Activated CD4-positive, alpha-beta T cell treated with anti-CD3 and anti-CD28 coated beads, Interleukin-2, amount 10 ng/mL, durations not matched to agents 24 days and 14 days (primary cell): ENCODE measurements at regions of chr15 and their contacts with region 1.

Region 1: GRCh38 chr15:55221090-55222011 is 24.6 kb upstream of the RSL24D1 start:
- DNase-seq: peak; percentile 68
- H3K4me3 Mint-ChIP-seq: peak overlapping the region; percentile 48
- H3K27ac Mint-ChIP-seq: peak overlapping the region; percentile 95
- H3K4me1 Mint-ChIP-seq: peaks cover 62% of the 10 kb centered on the region
- H3K27me3 Mint-ChIP-seq: no peaks in the 10 kb centered on the region

Region 2: GRCh38 chr15:55124616-55125015 is 96.7 kb before region 1 on chr15:
- intact Hi-C with region 1: no loop called
- DNase-seq: no peak
- H3K4me3 Mint-ChIP-seq: no peak overlapping the region
- H3K27ac Mint-ChIP-seq: no peak overlapping the region
- H3K4me1 Mint-ChIP-seq: no peaks in the 10 kb centered on the region
- H3K27me3 Mint-ChIP-seq: peaks cover 2% of the 10 kb centered on the region

Region 3: DNA sequence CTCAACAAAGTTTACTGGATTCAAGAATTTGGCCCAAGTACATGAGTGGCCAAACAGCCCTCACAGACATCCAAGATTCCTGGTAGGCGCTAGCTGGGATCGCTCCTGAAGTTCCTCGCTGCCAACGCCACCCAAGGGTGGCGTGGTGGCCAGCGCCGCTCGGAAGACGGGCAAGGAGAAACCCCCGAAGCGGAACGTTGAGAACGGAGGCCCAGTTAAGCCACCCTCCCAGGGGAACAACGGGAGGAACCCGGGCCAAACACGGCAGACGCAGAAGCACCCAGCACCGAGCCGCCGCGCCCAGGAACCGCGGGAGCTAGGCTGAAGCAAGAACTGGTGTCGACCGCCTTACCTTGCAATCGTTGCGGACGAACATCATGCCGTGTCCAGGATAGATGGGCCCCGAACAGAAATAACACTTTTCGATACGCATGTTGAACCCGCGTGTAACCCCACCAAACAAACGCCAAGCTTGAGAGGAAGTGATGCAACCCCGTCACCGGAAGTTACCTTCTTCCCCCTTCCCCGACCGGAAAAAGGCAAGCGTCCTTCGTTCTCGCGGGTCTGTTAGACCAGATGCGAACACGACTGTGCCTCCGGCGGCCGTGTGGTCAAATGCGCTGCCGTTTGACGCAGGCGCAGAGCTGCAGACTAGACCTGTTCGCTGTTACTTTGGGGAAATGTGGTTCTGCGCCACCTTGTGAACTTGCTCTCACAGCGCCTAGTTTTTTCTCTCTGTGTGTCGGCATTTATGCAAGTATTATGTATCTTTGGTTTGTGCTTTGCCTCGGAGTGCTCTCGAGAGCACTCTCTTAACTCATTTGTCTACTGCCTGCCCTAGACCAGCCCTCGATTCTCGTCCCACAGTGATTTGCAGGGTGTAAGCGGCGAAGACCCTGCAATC is 24.6 kb before region 1 on chr15 and contains the start of gene RSL24D1:
- intact Hi-C with region 1: loop called (anchors 2 kb)
- DNase-seq: peak; percentile 99
- H3K4me3 Mint-ChIP-seq: no peak within 1 kb of the TSS
- H3K27ac Mint-ChIP-seq: no peak within 1 kb of the TSS
- H3K4me1 Mint-ChIP-seq: peaks cover 14% of the 10 kb centered on the region
- H3K27me3 Mint-ChIP-seq: no peaks in the 10 kb centered on the region
- total RNA-seq, gene RSL24D1: 121 TPM in 2 replicates

Region 4: GRCh38 chr15:55231455-55231854 is 10.1 kb after region 1 on chr15:
- intact Hi-C with region 1: loop called (anchors 1 kb)
- DNase-seq: no peak
- H3K4me3 Mint-ChIP-seq: no peak overlapping the region
- H3K27ac Mint-ChIP-seq: no peak overlapping the region
- H3K4me1 Mint-ChIP-seq: peaks cover 22% of the 10 kb centered on the region
- H3K27me3 Mint-ChIP-seq: no peaks in the 10 kb centered on the region

Region 5: GRCh38 chr15:55241891-55242290 is 20.5 kb after region 1 on chr15:
- intact Hi-C with region 1: loop called (anchors 1 kb)
- DNase-seq: no peak
- H3K4me3 Mint-ChIP-seq: peak overlapping the region; percentile 4
- H3K27ac Mint-ChIP-seq: peak overlapping the region; percentile 39
- H3K4me1 Mint-ChIP-seq: peaks cover 57% of the 10 kb centered on the region
- H3K27me3 Mint-ChIP-seq: no peaks in the 10 kb centered on the region

Region 6: GRCh38 chr15:55279746-55280351 is 58.5 kb after region 1 on chr15:
- intact Hi-C with region 1: loop called (anchors 1 kb)
- DNase-seq: peak; percentile 85
- H3K4me3 Mint-ChIP-seq: peak overlapping the region; percentile 75
- H3K27ac Mint-ChIP-seq: peak overlapping the region; percentile 95
- H3K4me1 Mint-ChIP-seq: peaks cover 79% of the 10 kb centered on the region
- H3K27me3 Mint-ChIP-seq: no peaks in the 10 kb centered on the region

Region 7: DNA sequence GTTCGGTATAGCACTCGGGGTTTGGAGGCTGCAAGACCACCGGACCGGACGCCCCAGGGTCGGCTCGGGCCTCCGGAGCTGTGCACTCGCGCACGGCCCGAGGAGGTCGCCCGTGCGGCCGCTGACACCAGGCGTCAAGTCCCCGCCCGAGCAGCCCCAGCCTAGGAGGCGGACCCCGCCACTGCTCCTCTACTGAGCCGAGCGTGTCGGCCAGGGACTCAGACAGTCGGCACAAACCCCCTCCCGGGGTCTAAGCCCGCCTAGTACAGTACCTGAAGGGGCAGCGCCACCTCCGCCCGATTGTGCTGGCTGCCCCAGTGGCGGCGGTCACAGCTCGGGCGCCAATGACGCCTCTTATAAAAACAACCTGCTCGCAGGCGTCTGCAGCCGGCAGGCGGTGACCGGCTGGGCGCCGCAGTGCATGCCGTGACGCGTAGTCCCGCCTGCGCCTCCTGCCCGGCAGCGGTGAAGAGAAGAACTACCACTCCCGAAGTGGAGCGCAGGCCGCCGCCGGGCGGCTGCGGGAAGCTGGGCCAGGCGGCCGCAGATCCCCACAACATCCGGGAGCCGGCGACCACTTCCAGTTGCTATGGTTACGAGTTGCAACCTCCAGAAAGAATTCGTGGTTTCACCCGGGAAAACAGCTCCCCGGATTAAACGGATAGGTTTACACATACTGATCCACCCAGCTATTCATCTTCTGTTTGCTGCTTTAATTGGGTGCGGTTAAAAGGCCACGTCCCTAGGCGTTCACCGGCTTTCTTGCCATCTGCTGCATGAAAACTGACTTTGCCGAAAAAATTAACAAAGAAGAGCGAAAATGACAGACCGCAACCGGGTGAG is 186.8 kb after region 1 on chr15 and contains the starts of genes CCPG1 and PIERCE2:
- intact Hi-C with region 1: loop called (anchors 10 kb)
- DNase-seq: peak; percentile 97
- H3K4me3 Mint-ChIP-seq: peak within 1 kb of the TSS; percentile 87
- H3K27ac Mint-ChIP-seq: peak within 1 kb of the TSS; percentile 90
- H3K4me1 Mint-ChIP-seq: peaks cover 27% of the 10 kb centered on the region
- H3K27me3 Mint-ChIP-seq: no peaks in the 10 kb centered on the region
- total RNA-seq, gene CCPG1: 9.0 and 10.2 TPM in 2 replicates
- total RNA-seq, gene PIERCE2: 0.49 TPM in 1 of 2 replicates, not detected in the other

Region 8: GRCh38 chr15:55434989-55435825 is 213.9 kb after region 1 on chr15:
- intact Hi-C with region 1: loop called (anchors 2 kb)
- DNase-seq: peak; percentile 77
- H3K4me3 Mint-ChIP-seq: no peak overlapping the region
- H3K27ac Mint-ChIP-seq: no peak overlapping the region
- H3K4me1 Mint-ChIP-seq: peaks cover 4% of the 10 kb centered on the region
- H3K27me3 Mint-ChIP-seq: peaks cover 5% of the 10 kb centered on the region